Sigmoid colon (tissue), 7 donors: ENCODE measurements at regions of chr17 and their contacts with region 1.

Region 1: DNA sequence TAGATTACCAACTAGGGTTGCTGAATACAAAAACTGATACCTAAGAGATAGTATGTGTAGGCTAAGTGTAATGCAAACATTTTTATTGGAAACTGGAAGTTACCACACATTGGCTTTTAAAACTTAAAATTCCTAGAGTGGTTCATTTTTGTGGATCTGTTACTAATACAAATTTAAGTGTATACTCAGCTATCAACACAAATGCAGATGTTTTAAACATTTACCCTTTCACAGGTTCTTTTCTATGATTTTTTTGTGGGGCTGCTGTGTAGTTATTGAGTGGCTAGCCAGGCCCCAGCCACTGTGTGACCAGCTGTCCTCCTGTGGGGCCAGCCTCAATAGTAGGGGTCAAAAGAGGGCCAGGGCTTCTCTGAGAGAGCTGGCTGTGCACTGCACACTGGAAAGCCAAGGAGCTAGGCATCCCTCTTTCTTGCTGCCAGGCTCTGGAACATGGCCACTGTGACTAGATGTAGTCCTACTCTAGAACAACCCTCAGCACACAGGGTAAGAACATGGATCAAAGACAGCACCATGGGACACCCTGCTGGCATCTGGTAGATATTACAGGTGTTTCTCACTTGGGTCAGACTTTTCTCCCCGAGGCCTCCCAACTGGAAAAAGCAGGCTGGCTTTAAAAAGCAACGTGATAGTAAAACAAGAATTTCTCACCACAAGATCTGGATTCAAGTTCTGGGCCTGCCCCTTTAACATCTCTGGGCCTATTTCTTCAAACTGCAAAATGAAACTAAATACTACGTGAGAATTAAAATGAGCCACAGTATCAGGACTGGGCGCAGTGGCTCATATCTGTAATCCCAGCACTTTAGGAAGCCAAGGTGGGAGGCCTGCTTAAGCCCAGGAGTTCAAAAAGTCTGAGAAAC is 7.3 kb upstream of the VEZF1 start:
- DNase-seq: peak; percentile 91
- H3K4me3 ChIP-seq: no peak overlapping the region
- H3K27ac ChIP-seq: peak overlapping the region; percentile 70 to 80 (median 78)
- H3K4me1 ChIP-seq: peaks cover 0 to 35% (median 27%) of the 10 kb centered on the region in 4 donors
- H3K27me3 ChIP-seq: no peaks in the 10 kb centered on the region
- CTCF ChIP-seq: peak; percentile 67 to 89 (median 72)
- EP300 ChIP-seq: no peak
- POLR2A ChIP-seq: no peak

Region 2: GRCh38 chr17:57662644-57663308 is 332.5 kb before region 1 on chr17:
- intact Hi-C with region 1: loop called (anchors 10 kb)
- DNase-seq: peak; percentile 97
- H3K4me3 ChIP-seq: peak overlapping the region; percentile 14 to 36 (median 27)
- H3K27ac ChIP-seq: peak overlapping the region; percentile 65 to 94 (median 81)
- H3K4me1 ChIP-seq: peaks cover 0 to 21% (median 16%) of the 10 kb centered on the region in 4 donors
- H3K27me3 ChIP-seq: no peaks in the 10 kb centered on the region
- CTCF ChIP-seq: no peak
- EP300 ChIP-seq: no peak
- POLR2A ChIP-seq: no peak

Region 3: DNA sequence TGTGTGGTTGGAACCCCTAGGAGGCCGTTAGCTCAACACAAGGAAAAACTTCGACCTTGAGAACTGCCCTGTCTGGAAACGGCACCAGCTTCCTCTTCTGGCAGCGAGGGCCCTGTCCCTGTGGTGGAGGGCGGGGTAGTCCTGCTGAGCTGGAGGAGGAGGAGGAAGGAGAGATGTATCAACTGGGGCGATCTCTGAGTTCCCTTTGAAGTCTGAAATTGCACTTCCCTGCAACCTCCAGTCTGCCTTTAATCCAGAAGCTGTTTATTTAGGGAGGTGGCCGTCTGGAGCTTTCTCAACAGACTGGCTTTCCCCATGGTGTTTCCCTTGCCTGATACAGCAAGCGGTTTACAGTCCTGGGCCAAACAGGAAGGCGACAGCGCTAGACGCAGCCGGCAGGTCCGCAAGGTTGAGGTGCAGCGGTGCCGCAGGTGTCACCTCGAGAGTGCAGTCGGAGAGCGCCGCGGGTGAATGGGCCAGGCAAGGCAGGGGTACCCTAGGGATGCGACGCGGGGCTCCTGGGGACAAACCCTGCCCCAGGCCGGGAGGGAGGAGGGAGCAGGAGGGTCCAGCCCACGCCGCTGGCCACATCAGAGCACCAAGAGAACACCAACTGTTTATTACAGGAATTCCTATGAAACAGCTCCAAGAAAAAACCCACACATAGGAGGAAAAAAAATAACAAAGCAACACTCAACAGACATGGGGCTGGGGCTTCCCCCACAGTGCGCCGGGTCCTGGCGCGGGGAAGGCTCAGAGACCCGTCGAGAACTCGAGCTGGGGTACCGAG is 134.1 kb before region 1 on chr17:
- intact Hi-C with region 1: loop called (anchors 1 kb)
- DNase-seq: peak; percentile 85
- H3K4me3 ChIP-seq: peak overlapping the region; percentile 38 to 55 (median 50)
- H3K27ac ChIP-seq: peak overlapping the region; percentile 92 to 97 (median 94)
- H3K4me1 ChIP-seq: peaks cover 0 to 66% (median 56%) of the 10 kb centered on the region in 4 donors
- H3K27me3 ChIP-seq: no peaks in the 10 kb centered on the region
- CTCF ChIP-seq: no peak
- EP300 ChIP-seq: peak in 1 of 4 donors; percentile 16
- POLR2A ChIP-seq: no peak

Region 4: DNA sequence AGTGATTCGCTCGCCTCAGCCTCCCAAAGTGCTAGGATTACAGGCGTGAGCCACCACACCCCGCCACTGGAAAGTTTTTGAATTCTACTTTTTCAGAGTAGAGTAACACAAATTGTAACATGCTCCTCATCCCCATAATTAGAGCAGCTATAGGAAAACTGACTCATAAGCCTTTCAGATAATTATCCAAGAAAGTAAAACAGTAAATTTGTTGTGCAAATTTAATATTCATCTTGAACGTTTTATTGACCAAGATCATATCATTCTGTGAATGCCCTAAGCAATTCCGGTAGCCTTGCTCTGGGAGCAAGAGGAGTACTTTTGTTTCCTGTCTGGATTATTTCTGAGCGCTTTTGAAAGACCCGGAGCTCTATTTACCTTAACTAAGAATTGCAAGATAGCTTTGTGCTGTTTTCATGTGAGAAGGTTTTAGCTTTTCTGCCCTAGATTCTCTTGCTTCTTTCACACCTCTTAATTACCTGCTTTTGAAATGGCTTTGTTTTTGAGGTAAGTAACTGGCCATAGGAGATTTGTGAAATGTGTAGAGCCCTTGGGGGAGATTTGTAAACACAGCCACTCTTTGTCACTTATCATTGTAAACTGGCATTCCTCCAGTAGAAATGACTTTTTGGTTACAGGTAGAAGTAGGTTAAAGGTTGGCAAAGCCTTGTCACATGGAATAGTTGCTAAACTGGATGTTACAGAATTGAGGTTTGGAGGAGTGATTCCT is 1301.6 kb after region 1 on chr17:
- intact Hi-C with region 1: no loop called
- DNase-seq: no peak
- H3K4me3 ChIP-seq: no peak overlapping the region
- H3K27ac ChIP-seq: no peak overlapping the region
- H3K4me1 ChIP-seq: no peaks in the 10 kb centered on the region
- H3K27me3 ChIP-seq: no peaks in the 10 kb centered on the region
- CTCF ChIP-seq: no peak
- EP300 ChIP-seq: no peak
- POLR2A ChIP-seq: no peak